ENCODE measurements at regions of chr11 and their contacts with region 1.

Region 1: GRCh38 chr11:125592305-125593112 is at the start of gene STT3A:
- DNase-seq: peak; percentile 99
- H3K4me3 ChIP-seq: peak within 1 kb of the TSS; percentile 77 to 96 (median 79)
- H3K27ac ChIP-seq: peak within 1 kb of the TSS; percentile 90 to 97 (median 94)
- H3K4me1 ChIP-seq: peaks cover 14 to 30% (median 25%) of the 10 kb centered on the region in 4 donors
- H3K27me3 ChIP-seq: no peaks in the 10 kb centered on the region
- CTCF ChIP-seq: no peak
- EP300 ChIP-seq: no peak
- POLR2A ChIP-seq: peak; percentile 92
- total RNA-seq, gene STT3A: 21.7 to 73.2 (median 64.3) TPM

Region 2: GRCh38 chr11:125675196-125675595 is 82.7 kb after region 1 on chr11:
- in situ Hi-C with region 1: no loop called
- intact Hi-C with region 1: no loop called
- DNase-seq: no peak
- H3K4me3 ChIP-seq: no peak overlapping the region
- H3K27ac ChIP-seq: no peak overlapping the region
- H3K4me1 ChIP-seq: no peaks in the 10 kb centered on the region
- H3K27me3 ChIP-seq: no peaks in the 10 kb centered on the region
- CTCF ChIP-seq: no peak
- EP300 ChIP-seq: no peak
- POLR2A ChIP-seq: no peak

Region 3: DNA sequence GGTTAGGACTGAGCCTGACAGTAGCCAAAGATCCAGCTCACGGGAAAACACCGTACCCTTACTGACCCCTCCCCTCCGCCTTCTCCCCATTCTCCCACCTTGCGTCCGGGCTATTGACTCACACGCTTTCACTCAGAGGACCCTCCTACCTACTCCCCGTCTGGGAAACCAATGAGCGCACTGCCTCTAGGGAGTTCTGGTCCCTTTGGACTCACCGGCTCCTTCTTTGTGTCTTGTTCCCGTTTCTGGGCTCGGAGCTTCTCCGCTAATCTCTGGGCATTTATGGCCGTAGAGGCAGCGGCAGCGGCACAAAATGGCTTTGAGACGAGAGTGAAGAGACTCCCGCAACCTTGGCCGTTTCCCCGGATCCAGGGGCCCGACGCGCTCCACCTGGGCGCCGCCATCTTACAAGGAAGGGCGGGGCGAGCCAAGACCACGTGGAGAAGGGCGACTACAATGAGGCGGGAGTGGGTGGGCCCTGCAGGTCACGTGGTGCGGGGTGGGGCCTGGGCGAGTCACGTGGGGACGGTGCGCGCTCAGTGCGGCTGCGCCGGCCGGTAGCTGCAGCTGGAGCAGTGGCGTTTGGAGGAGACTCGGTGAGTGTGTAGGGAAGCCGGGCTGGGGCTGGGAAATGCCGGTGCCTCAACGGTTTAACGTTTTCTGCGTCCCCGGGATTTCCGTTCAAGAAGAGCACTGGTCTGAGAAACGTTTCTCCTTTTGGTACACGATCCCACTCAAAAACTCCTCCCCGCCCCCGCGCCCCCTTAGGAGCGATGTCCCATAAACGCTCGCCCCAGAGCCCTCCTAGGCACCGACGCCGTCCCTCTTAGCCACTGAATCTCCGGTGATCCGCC is 619.0 kb after region 1 on chr11 and contains the starts of genes FAM118B and RPUSD4:
- in situ Hi-C with region 1: loop called in 1 of 4 experiments (anchors 25 kb)
- intact Hi-C with region 1: no loop called
- DNase-seq: peak; percentile 99
- H3K4me3 ChIP-seq: peak within 1 kb of the TSS; percentile 71 to 92 (median 80)
- H3K27ac ChIP-seq: peak within 1 kb of the TSS; percentile 83 to 88 (median 84)
- H3K4me1 ChIP-seq: peaks cover 0 to 44% (median 28%) of the 10 kb centered on the region in 4 donors
- H3K27me3 ChIP-seq: no peaks in the 10 kb centered on the region
- CTCF ChIP-seq: peak in 1 of 5 experiments; percentile 12
- EP300 ChIP-seq: no peak
- POLR2A ChIP-seq: peak; percentile 90
- total RNA-seq, gene FAM118B: 13.7 to 54.5 (median 47.3) TPM
- total RNA-seq, gene RPUSD4: 11.1 to 20.3 (median 12.6) TPM

Measured in transverse colon (tissue), 4 donors.